ENCODE measurements at regions of chr12 and their contacts with region 1.

Region 1: GRCh38 chr12:23493672-23494071 is 455.8 kb downstream of the SOX5 start:
- DNase-seq: no peak
- H3K27ac ChIP-seq: no peak overlapping the region
- CTCF ChIP-seq: no peak

Region 2: DNA sequence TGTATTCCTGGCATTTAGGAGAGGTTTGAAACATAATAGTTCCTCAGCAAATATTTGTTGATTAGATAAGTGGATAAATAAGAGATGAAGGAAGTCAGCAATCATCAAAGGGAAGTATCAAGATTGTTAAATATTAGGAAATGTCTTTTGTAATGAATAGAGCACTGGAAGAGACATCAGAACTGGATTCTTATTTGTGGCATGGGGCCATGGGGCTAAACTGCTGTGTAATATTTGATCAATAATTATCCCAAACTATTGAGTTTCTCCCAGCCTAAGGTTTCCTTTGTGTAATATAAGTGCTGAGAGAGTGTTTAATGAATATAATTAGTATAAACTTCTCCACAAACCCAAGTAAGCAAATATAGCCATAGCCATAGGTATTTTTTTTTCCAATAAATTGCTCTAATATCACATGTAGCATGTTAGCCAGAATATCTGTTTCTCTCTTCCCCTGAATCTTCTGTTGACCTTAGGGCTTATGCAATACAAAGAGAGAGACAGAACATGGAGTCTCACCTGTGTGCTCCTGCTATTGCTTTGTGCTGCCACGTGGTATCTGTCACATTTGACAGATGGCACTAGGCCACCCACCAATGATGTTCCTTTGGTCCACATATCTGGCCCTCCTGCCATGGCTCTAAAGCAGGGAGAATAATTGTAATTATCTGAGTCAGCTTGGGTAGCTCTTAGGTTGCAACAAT is 202.9 kb before region 1 on chr12:
- CTCF ChIA-PET with region 1: no interaction called
- POLR2A ChIA-PET with region 1: no interaction called
- DNase-seq: no peak
- H3K27ac ChIP-seq: no peak overlapping the region
- CTCF ChIP-seq: no peak

Region 3: DNA sequence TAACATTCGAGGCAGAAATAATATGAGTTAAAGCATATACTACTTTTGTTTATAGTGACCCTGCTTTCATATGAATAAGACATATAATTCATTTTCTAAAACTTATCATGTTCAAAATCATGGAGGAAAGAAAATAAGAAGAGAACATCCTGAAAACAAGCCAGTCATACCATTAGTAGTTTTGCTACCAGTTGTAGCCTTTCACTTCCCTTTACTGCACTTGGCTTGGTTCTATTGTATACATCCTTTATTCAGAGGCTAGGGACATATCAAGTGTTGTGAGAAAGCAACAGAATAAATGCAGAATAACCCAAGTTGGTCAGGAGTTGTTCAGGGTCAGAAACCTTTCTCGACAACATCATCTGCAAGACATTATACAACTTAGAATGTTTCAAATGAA is 142.9 kb before region 1 on chr12:
- CTCF ChIA-PET with region 1: no interaction called
- POLR2A ChIA-PET with region 1: interaction called, 11 read pairs
- DNase-seq: no peak
- H3K27ac ChIP-seq: no peak overlapping the region
- CTCF ChIP-seq: no peak